ENCODE measurements at regions of chr10 and their contacts with region 1.

Region 1: DNA sequence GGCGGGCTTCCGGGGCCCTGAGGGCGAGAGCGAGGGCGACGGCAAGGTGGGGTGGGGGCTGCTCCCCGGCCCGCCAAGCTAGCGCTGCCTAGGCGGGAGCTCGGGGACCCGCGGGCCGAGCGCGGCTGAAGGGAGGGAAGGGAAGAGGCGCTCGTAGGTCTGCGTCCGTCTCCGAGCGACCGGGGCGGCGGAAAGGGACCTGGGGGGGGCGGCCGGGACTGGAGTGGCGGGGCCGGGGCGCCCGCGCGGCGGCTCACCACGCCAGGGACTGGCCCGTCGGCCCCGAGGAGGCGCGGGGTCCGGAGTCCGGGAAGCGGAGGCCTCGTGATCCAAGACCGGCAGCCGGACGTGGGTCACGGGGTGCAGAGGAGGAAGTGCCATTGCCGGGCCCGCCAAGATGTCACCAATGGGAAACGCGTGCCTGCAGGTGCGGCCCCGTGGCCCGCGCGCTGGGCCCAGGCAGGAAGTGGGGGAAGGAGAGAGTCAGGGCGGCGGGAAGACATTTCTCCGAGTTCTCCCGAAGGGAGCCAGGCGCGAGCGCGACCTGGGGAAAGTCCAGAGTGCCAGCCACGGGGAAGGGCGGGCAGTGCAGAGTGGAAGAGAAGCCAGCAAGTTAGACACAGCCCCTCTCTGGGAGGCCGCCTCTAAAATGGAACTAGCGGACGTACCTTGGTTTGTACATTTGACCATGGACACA is 11.9 kb downstream of the HNRNPF start:
- DNase-seq: peak; percentile 88 to 91
- ATAC-seq: peak; percentile 90 to 93 (median 91)
- H3K4me3 ChIP-seq: peak overlapping the region; percentile 48 to 85 (median 74)
- H3K27ac ChIP-seq: peak overlapping the region; percentile 94 to 99 (median 98)
- H3K4me1 ChIP-seq: peaks cover 9 to 85% (median 62%) of the 10 kb centered on the region in 9 donors
- H3K27me3 ChIP-seq: no peaks in the 10 kb centered on the region
- CTCF ChIP-seq: no peak

Region 2: DNA sequence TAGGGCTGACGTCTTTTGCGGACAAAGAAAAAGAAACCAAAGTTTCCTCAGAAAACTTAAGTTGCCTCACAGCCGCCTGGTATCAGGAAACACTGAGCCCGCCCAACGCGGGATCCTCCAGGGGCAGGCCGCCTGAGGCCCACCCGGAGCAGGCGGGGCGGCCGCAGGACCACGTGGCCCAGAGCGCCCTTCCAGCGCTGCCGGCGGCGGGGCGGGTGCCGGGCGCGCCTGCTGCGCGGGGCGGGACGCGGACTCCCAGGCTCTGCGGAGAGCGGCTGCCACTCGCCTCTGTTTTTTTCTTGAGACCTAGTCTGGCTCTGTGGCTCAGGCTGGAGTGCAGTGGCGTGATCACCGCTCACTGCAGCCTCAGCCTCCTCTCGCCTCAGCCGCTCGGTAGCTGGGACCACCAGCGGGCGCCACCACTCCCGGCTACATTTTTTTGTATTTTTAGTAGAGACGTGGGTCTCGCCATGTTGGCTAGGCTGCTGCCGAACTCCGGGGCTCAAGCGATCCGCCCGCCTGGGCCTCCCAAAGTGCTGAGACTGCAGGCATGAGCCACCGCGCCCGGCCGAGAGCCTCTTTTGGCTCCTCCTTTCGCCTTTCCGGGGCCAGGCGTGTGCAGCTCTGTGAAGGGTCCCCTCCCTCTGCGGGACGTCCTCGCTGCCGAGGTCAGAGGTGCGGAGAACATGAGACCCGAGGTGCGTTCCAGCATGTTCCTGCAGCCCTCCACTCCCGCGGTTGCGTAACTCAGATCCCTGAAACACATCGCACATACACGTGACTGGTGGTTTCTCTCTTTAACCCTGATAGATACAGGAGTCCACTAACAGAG is 23.5 kb after region 1 on chr10:
- intact Hi-C with region 1: loop called in 1 of 10 experiments (anchors 2 kb)
- DNase-seq: peak; percentile 86 to 89
- ATAC-seq: peak; percentile 97 to 100 (median 98)
- H3K4me3 ChIP-seq: peak overlapping the region; percentile 41 to 75 (median 66)
- H3K27ac ChIP-seq: peak overlapping the region; percentile 94 to 100 (median 99)
- H3K4me1 ChIP-seq: peaks cover 0 to 41% (median 12%) of the 10 kb centered on the region in 9 donors
- H3K27me3 ChIP-seq: no peaks in the 10 kb centered on the region
- CTCF ChIP-seq: peak in 6 of 9 donors; percentile 20 to 55 (median 28)

Measured in heart right ventricle (tissue), 16 donors.